Caco-2 (cell line): ENCODE measurements at regions of chr16 and their contacts with region 1.

Region 1: DNA sequence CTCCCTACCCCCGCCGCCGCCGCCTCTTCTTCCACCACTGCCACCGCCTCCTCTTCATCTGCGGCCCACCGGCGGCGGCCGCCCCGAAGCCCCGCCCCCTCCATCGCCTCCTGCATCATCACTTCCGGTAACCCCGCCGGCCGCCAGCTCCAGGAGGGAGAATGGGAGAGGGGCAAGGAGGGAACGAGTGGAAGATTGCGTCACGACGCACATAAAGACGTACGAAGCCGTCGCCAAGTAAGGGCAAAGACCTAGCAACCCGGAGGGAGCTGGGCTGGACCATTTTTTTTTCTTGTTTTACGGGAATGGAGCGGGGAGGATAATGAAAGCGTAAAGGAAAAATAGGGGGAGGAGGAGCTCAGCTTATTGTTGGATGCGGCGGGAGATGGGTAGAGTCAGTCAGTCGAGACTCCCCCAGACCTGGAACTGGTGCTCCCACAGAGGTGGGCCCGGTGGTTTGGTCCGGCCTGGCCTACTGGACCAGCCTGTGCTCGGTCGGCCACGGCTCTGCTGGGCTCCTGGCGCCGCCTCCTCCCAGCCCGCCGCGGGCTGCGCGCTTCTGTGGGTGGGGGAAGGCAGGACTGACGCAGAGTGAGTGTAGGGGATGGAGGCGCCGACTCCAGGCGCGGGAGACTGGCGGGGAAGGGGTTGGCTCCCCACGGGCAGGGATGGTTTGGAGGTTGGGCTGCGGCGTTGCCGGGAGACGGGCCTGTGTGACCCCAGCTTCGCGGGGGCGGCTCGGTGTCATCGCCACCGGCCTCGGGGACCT is at the starts of genes DCUN1D3 and LYRM1:
- DNase-seq: peak; percentile 94 to 98
- H3K4me3 ChIP-seq: peak within 1 kb of the TSS; percentile 68
- H3K4me3 Mint-ChIP-seq: peak within 1 kb of the TSS; percentile 74
- H3K27ac Mint-ChIP-seq: peak within 1 kb of the TSS; percentile 93
- H3K4me1 ChIP-seq: peaks cover 52% of the 10 kb centered on the region
- H3K4me1 Mint-ChIP-seq: peaks cover 54% of the 10 kb centered on the region
- H3K27me3 ChIP-seq: no peaks in the 10 kb centered on the region
- H3K27me3 Mint-ChIP-seq: no peaks in the 10 kb centered on the region
- CTCF ChIP-seq: no peak
- total RNA-seq, gene DCUN1D3: 16.4 and 19.2 TPM in 2 replicates
- total RNA-seq, gene LYRM1: 40.3 and 46.1 TPM in 2 replicates

Region 2: GRCh38 chr16:20938426-20938825 is 37.9 kb after region 1 on chr16:
- CTCF ChIA-PET with region 1: interaction called, 6 read pairs
- POLR2A ChIA-PET with region 1: interaction called, 10 read pairs
- intact Hi-C with region 1: loop called (anchors 1 kb)
- DNase-seq: no peak
- H3K4me3 ChIP-seq: no peak overlapping the region
- H3K4me3 Mint-ChIP-seq: no peak overlapping the region
- H3K27ac Mint-ChIP-seq: peak overlapping the region; percentile 80
- H3K4me1 ChIP-seq: peaks cover 47% of the 10 kb centered on the region
- H3K4me1 Mint-ChIP-seq: no peaks in the 10 kb centered on the region
- H3K27me3 ChIP-seq: no peaks in the 10 kb centered on the region
- H3K27me3 Mint-ChIP-seq: no peaks in the 10 kb centered on the region
- CTCF ChIP-seq: no peak

Region 3: DNA sequence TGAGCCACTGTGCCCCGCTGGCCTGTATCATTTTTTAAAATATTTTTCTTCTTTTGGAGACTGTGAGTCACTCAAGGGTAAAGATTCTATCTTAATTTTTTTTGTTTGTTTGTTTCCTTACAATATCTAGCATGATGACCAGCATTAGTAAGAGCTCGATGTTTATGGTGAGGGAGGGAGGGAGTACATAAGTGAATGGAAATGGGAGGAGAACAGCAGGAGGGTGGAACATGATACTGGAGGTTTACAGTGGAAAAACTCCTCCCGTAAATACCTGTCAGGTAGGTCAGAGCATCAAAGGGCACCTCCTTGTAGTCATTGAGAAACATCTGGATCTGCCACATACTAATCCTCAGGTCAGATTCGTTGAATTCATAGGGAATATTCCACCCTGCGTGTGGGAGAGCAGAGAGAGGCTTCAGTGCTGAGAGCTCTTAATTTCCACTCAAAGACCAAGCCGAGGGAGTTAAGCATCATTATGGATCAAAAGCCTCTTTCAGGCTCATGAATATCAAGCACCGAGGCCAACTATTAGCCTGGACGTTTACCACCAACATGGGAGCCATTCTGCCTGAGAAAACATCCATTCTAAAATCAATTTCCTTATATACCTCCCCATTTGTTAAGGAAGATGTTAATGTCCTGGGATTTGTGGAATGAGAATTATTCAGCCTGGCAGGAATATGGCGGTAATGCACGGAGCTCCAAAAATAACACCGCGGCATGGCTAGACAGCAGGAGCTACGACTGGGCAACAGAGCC is 51.9 kb after region 1 on chr16:
- CTCF ChIA-PET with region 1: no interaction called
- POLR2A ChIA-PET with region 1: no interaction called
- intact Hi-C with region 1: loop called (anchors 5 kb)
- DNase-seq: peak in 1 of 2 experiments; percentile 41
- H3K4me3 ChIP-seq: no peak overlapping the region
- H3K4me3 Mint-ChIP-seq: no peak overlapping the region
- H3K27ac Mint-ChIP-seq: peak overlapping the region; percentile 31
- H3K4me1 ChIP-seq: peaks cover 5% of the 10 kb centered on the region
- H3K4me1 Mint-ChIP-seq: peaks cover 6% of the 10 kb centered on the region
- H3K27me3 ChIP-seq: no peaks in the 10 kb centered on the region
- H3K27me3 Mint-ChIP-seq: no peaks in the 10 kb centered on the region
- CTCF ChIP-seq: no peak

Region 4: GRCh38 chr16:21083729-21084268 is 183.3 kb after region 1 on chr16:
- CTCF ChIA-PET with region 1: no interaction called
- POLR2A ChIA-PET with region 1: no interaction called
- intact Hi-C with region 1: loop called (anchors 5 kb)
- DNase-seq: peak; percentile 50 to 73
- H3K4me3 ChIP-seq: no peak overlapping the region
- H3K4me3 Mint-ChIP-seq: no peak overlapping the region
- H3K27ac Mint-ChIP-seq: no peak overlapping the region
- H3K4me1 ChIP-seq: no peaks in the 10 kb centered on the region
- H3K4me1 Mint-ChIP-seq: no peaks in the 10 kb centered on the region
- H3K27me3 ChIP-seq: no peaks in the 10 kb centered on the region
- H3K27me3 Mint-ChIP-seq: no peaks in the 10 kb centered on the region
- CTCF ChIP-seq: peak; percentile 61 to 64